ENCODE measurements at regions of chr6 and their contacts with region 1.

Region 1: GRCh38 chr6:164628302-164628931 is 681.0 kb downstream of the C6orf118 start:
- DNase-seq: no peak
- ATAC-seq: no peak
- H3K4me3 ChIP-seq: no peak overlapping the region
- H3K27ac ChIP-seq: no peak overlapping the region
- H3K4me1 ChIP-seq: no peaks in the 10 kb centered on the region
- H3K27me3 ChIP-seq: no peaks in the 10 kb centered on the region
- CTCF ChIP-seq: no peak

Region 2: DNA sequence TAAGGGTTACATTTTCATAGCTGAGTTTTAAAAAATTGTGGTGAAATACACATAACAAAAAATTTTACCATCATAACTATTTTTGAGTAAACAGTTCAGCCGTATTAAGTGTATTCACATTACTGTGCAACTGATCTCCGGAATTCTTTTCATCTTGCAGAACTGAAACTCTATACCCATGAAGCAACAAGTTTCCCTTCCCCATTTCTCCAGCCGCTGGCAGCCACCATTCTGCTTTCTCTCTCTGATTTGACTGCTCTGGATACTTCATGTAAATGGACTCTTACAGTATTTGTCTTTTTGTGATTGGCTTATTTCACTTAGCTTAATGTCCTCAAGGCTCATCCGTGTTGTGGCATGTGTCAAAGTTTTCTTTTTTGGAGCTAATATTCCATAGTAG is 872.3 kb before region 1 on chr6:
- intact Hi-C with region 1: no loop called
- DNase-seq: no peak
- ATAC-seq: peak; percentile 83 to 94 (median 86)
- H3K4me3 ChIP-seq: peak overlapping the region; percentile 17
- H3K27ac ChIP-seq: peak overlapping the region; percentile 51
- H3K4me1 ChIP-seq: peaks cover 11% of the 10 kb centered on the region
- H3K27me3 ChIP-seq: no peaks in the 10 kb centered on the region
- CTCF ChIP-seq: no peak

Region 3: DNA sequence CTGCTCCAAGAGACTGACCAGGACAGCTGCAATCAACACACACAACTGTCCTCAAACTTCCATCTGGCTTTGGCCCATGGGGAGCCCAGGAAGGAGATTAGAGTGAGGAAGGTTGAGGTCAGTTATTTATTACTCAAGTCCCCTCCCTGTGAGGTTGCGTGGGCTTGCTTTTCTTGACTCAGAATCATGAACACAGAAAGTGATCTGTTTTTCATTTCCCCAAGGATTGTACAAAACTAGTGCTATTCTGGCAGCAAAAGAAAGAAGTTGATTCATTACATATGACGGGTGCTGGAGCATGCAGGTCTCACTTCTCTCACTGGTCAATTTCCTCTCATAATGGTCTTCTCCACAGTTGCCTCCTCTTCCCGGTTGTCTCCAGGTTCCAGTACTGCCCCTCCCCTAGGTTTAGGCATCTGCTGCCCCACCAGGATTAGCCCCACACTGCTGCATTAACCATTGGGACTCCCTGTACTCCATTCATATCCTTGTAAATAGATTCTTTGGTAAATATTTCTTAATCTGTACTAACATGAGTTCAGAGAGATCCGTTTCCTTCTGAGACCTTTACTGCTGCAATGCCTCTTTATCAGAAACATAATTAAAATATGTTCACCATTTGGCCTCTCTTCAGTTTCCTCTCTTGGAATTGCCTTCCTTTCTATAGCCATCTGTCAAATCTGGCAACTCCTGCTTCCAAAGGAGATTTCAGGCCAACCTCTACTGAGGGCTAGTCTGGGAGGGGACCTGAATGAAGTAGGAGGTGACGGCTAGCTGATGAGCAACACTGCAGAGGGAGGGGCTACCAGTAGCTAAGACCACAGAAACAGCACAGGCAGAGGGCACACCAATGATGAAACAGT is 325.1 kb before region 1 on chr6:
- intact Hi-C with region 1: loop called in 1 of 2 experiments (anchors 5 kb)
- DNase-seq: peak; percentile 52 to 68
- ATAC-seq: peak; percentile 13 to 56 (median 49)
- H3K4me3 ChIP-seq: no peak overlapping the region
- H3K27ac ChIP-seq: no peak overlapping the region
- H3K4me1 ChIP-seq: no peaks in the 10 kb centered on the region
- H3K27me3 ChIP-seq: no peaks in the 10 kb centered on the region
- CTCF ChIP-seq: no peak

Region 4: GRCh38 chr6:165091121-165091785 is 462.8 kb after region 1 on chr6:
- intact Hi-C with region 1: no loop called
- DNase-seq: no peak
- ATAC-seq: no peak
- H3K4me3 ChIP-seq: no peak overlapping the region
- H3K27ac ChIP-seq: no peak overlapping the region
- H3K4me1 ChIP-seq: no peaks in the 10 kb centered on the region
- H3K27me3 ChIP-seq: no peaks in the 10 kb centered on the region
- CTCF ChIP-seq: no peak

Region 5: DNA sequence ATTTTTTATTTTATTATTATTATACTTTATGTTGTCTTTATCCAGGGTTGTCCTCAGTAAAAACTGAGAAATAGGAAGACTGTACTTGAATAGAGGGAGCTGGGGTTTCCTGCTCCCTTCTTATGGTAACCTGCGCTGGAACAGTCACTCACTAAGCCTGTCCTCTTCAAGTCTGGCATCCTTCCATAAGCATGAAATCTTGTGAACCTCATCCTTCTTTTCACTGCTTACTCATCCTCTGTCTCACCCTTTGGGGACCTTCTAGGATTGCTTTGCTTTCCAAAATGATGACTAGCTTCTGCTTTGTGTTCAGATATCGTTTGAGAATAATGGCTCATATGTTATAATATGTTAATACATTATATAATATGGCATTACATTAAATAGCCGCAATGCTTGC is 590.4 kb after region 1 on chr6:
- intact Hi-C with region 1: no loop called
- DNase-seq: no peak
- ATAC-seq: peak in 3 of 4 donors; percentile 62 to 87 (median 78)
- H3K4me3 ChIP-seq: no peak overlapping the region
- H3K27ac ChIP-seq: no peak overlapping the region
- H3K4me1 ChIP-seq: no peaks in the 10 kb centered on the region
- H3K27me3 ChIP-seq: no peaks in the 10 kb centered on the region
- CTCF ChIP-seq: no peak